Astrocyte of the cerebellum (primary cell): ENCODE measurements at regions of chr17 and their contacts with region 1.

Region 1: GRCh38 chr17:9828296-9829295 is 2.9 kb downstream of the GLP2R start:
- DNase-seq: no peak
- H3K4me3 ChIP-seq: no peak overlapping the region
- CTCF ChIP-seq: no peak

Region 2: GRCh38 chr17:9772658-9773057 is 55.9 kb before region 1 on chr17:
- in situ Hi-C with region 1: loop called (anchors 5 kb)
- DNase-seq: no peak
- H3K4me3 ChIP-seq: no peak overlapping the region
- CTCF ChIP-seq: no peak

Region 3: GRCh38 chr17:9928601-9929333 is 100.2 kb after region 1 on chr17:
- in situ Hi-C with region 1: no loop called
- DNase-seq: peak; percentile 82
- H3K4me3 ChIP-seq: no peak overlapping the region
- CTCF ChIP-seq: peak; percentile 76